Activated naive CD8-positive, alpha-beta T cell treated with anti-CD3 and anti-CD28 coated beads, Interleukin-2, amount 10 ng/mL, durations not matched to agents 7 days and 5 days (primary cell): ENCODE measurements at regions of chr4 and their contacts with region 1.

Region 1: DNA sequence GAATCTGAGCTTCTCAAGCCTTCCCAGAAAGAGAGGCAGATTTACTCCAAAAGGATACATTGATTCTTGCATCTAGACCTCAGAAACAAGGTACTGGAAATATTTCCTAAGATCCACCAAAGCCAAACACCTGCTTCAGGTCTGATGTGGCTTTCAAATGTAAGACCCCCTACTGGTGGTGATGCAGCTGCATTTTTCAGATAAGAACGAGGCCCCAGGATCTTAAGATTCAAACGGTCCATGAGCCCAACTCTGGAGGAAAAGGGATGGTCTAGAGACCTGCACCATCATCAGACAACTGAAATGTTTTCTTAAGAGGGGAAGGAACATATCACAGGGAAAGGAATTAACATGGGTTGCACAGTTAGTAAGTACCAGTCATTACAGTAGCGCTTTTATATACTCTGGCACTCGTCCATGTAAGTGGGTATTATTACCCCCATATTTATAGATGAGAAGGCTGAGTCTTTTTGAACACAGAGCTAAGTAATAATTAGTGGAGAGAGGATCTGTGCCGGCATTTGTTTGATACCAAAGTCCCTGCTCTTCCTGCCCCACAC is 73.7 kb downstream of the LEF1 start:
- DNase-seq: no peak
- ATAC-seq: peak; percentile 19
- H3K4me3 Mint-ChIP-seq: peak overlapping the region; percentile 53
- H3K27ac Mint-ChIP-seq: peak overlapping the region; percentile 77
- H3K4me1 Mint-ChIP-seq: peaks cover 78% of the 10 kb centered on the region
- H3K27me3 Mint-ChIP-seq: no peaks in the 10 kb centered on the region

Region 2: GRCh38 chr4:108080747-108081146 is 14.3 kb before region 1 on chr4:
- POLR2A ChIA-PET with region 1: interaction called, 10 read pairs
- DNase-seq: peak; percentile 57
- ATAC-seq: peak; percentile 73
- H3K4me3 Mint-ChIP-seq: peak overlapping the region; percentile 80
- H3K27ac Mint-ChIP-seq: peak overlapping the region; percentile 92
- H3K4me1 Mint-ChIP-seq: peaks cover 46% of the 10 kb centered on the region
- H3K27me3 Mint-ChIP-seq: no peaks in the 10 kb centered on the region